Activated naive CD4-positive, alpha-beta T cell treated with anti-CD3 and anti-CD28 coated beads for 36 hours (primary cell): ENCODE measurements at regions of chr11 and their contacts with region 1.

Region 1: GRCh38 chr11:31355131-31355530 is 14.4 kb downstream of the DCDC1 start:
- DNase-seq: no peak
- H3K4me3 Mint-ChIP-seq: no peak overlapping the region
- H3K27ac Mint-ChIP-seq: no peak overlapping the region
- H3K4me1 Mint-ChIP-seq: no peaks in the 10 kb centered on the region
- H3K27me3 Mint-ChIP-seq: no peaks in the 10 kb centered on the region

Region 2: GRCh38 chr11:31267720-31268119 is 87.4 kb before region 1 on chr11:
- CTCF ChIA-PET with region 1: no interaction called
- intact Hi-C with region 1: no loop called
- DNase-seq: no peak
- H3K4me3 Mint-ChIP-seq: no peak overlapping the region
- H3K27ac Mint-ChIP-seq: no peak overlapping the region
- H3K4me1 Mint-ChIP-seq: no peaks in the 10 kb centered on the region
- H3K27me3 Mint-ChIP-seq: peaks cover 2% of the 10 kb centered on the region

Region 3: GRCh38 chr11:31340903-31341572 is 14.1 kb before region 1 on chr11:
- CTCF ChIA-PET with region 1: no interaction called
- intact Hi-C with region 1: loop called (anchors 1 kb)
- DNase-seq: peak; percentile 15
- H3K4me3 Mint-ChIP-seq: no peak overlapping the region
- H3K27ac Mint-ChIP-seq: no peak overlapping the region
- H3K4me1 Mint-ChIP-seq: no peaks in the 10 kb centered on the region
- H3K27me3 Mint-ChIP-seq: peaks cover 16% of the 10 kb centered on the region